Right cardiac atrium (tissue), 5 donors: ENCODE measurements at regions of chr6 and their contacts with region 1.

Region 1: GRCh38 chr6:116100419-116101301 is at the start of gene NT5DC1:
- DNase-seq: peak; percentile 85 to 95 (median 94)
- ATAC-seq: peak; percentile 98 to 99
- H3K4me3 ChIP-seq: peak within 1 kb of the TSS; percentile 68
- H3K27ac ChIP-seq: peak within 1 kb of the TSS; percentile 96
- H3K4me1 ChIP-seq: peaks cover 8% of the 10 kb centered on the region
- H3K27me3 ChIP-seq: no peaks in the 10 kb centered on the region
- total RNA-seq, gene NT5DC1: 42.0 to 61.7 (median 52.2) TPM

Region 2: GRCh38 chr6:116010790-116011401 is 89.8 kb before region 1 on chr6:
- intact Hi-C with region 1: loop called in 3 of 4 experiments (anchors 2 to 5 kb)
- DNase-seq: peak; percentile 75 to 92 (median 76)
- ATAC-seq: peak; percentile 73 to 76
- H3K4me3 ChIP-seq: no peak overlapping the region
- H3K27ac ChIP-seq: no peak overlapping the region
- H3K4me1 ChIP-seq: no peaks in the 10 kb centered on the region
- H3K27me3 ChIP-seq: no peaks in the 10 kb centered on the region